ENCODE measurements at regions of chr15 and their contacts with region 1.

Region 1: DNA sequence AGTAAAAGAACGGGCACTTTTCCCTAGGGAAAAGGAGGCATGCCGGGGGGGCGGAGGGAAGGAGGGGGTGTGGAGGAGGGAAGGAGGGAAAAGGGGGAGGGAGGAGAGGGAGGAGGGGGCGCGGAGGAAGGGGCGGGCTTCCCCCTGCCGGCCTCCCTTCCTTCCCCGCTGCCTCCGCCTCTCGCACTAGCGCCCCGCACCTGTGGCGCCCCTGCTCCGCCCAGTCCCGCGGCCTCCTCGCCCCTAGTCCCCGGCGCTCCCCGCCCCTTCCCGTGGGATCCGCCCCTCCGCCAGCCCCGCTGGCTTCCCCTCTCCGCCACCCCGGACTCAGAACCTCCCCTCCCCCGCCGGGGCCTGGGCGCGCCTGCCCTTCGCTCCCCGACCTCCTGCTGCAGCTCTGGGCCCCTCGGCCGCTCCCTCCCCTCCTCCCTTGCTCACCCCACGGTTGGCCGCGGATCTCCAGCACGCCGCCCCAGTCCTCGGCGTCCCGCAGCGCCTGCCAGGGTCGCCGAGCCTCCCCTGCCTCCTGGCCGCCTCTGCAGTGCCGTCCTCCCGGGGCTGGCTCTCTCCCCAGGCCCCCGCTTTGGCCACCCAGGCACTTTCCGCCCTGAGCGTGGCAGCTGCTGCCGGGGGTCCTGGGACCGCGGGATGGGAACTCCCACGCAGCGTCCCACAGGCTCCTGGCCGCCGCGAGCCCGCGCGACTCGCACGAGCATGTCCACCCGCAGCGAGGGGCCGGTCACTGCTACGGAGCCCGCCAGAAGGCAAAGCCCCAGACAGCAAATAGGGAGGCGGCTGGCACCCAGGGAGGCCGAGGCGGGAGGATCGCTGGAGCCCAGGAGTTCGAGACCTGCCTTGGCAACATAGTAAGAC is 147.4 kb downstream of the TJP1 start:
- DNase-seq: no peak
- H3K4me3 ChIP-seq: peak overlapping the region; percentile 33 to 64 (median 52)
- H3K27ac ChIP-seq: peak overlapping the region in 1 of 4 donors; percentile 7
- H3K4me1 ChIP-seq: peaks cover 0 to 16% (median 10%) of the 10 kb centered on the region in 4 donors
- H3K27me3 ChIP-seq: peaks cover 0 to 18% (median 8%) of the 10 kb centered on the region in 3 donors
- CTCF ChIP-seq: no peak
- EP300 ChIP-seq: no peak
- POLR2A ChIP-seq: peak in 1 of 2 donors; percentile 6

Region 2: DNA sequence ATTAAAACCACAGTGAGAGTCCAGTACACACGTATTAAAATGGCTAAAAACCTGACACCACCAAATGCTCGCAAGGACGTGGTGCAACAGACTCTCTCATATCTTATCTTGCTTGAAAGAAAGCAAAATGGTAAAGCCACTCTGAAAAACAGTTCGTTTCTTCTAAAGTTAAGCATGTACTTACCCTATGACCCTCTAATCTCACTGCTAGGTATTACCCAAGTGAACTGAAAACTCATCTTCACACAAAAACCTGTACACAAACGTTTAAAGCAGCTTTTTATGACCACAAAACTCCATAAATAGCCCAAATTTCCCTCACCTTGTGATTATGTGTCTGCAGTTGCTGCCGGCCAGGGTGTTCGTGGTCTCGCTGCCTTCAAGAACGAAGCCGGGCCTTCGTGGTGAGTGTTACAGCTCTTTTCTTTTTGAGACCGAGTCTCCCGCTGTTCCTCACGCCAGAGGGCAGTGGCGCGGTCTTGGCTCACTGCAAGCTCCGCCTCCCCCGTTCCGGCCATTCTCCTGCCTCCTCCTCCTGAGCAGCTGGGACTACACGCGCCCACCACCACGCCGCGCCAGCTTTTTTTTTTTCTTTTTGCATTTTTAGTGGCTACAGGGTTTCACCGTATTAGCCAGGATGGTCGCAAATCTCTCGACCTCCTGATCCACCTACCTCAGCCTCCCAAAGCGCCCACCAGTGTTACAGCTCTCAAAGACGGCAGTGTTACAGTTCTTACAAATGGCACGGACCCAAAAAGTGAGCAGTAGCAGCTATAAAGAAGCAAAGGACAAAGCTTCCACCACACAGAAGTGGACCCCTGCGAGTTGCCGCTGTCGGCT is 18.0 kb before region 1 on chr15:
- intact Hi-C with region 1: no loop called
- DNase-seq: no peak
- H3K4me3 ChIP-seq: no peak overlapping the region
- H3K27ac ChIP-seq: no peak overlapping the region
- H3K4me1 ChIP-seq: no peaks in the 10 kb centered on the region
- H3K27me3 ChIP-seq: no peaks in the 10 kb centered on the region
- CTCF ChIP-seq: no peak
- EP300 ChIP-seq: no peak
- POLR2A ChIP-seq: no peak

Region 3: GRCh38 chr15:29854413-29854812 is 179.5 kb after region 1 on chr15:
- intact Hi-C with region 1: no loop called
- DNase-seq: no peak
- H3K4me3 ChIP-seq: no peak overlapping the region
- H3K27ac ChIP-seq: no peak overlapping the region
- H3K4me1 ChIP-seq: no peaks in the 10 kb centered on the region
- H3K27me3 ChIP-seq: no peaks in the 10 kb centered on the region
- CTCF ChIP-seq: no peak
- EP300 ChIP-seq: no peak
- POLR2A ChIP-seq: no peak

Region 4: GRCh38 chr15:30043211-30043655 is 368.3 kb after region 1 on chr15:
- intact Hi-C with region 1: loop called (anchors 10 kb)
- DNase-seq: no peak
- H3K4me3 ChIP-seq: no peak overlapping the region
- H3K27ac ChIP-seq: no peak overlapping the region
- H3K4me1 ChIP-seq: peaks cover 0 to 10% (median 4%) of the 10 kb centered on the region in 4 donors
- H3K27me3 ChIP-seq: no peaks in the 10 kb centered on the region
- CTCF ChIP-seq: peak in 1 of 4 experiments; percentile 35
- EP300 ChIP-seq: no peak
- POLR2A ChIP-seq: no peak